ENCODE measurements at regions of chr2 and their contacts with region 1.

Region 1: DNA sequence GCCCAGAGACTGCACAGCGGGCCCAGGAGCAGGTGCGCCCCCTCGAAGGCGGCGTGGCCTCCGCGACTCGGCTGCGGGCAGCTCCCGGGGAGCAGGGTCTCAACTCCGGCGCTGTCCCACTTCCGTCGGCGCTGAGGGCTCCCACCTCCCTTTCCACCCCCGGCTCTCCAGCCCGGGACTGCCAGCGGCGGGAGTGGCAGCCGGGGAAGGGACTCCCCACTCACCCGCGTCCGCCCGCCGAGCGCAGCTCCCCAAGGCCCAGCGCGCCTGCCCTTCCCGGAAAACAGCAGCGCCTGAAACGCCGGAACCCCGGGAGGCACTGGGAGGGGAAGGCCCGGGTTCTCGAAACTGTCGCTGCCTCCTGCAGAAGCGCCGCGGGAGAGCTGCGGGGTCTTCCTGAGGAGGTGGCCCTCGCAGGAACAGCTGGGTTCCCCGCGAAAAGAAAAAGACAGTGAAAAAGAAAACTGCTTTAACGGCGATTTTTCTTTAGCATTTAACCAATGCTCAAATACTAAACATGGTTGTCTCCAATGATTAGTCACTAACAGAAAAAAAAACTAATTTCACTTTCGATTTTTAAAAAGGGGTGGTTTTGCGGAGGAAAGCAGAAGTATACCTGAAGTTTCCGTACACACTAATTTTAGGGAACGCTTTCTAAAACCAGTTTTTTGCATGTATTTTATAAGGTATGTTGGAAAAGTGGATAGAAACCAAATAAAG is at the start of gene NMI:
- DNase-seq: peak; percentile 59
- ATAC-seq: peak; percentile 85
- H3K4me3 ChIP-seq: peak within 1 kb of the TSS; percentile 57
- H3K27ac ChIP-seq: peak within 1 kb of the TSS; percentile 93
- H3K4me1 ChIP-seq: peaks cover 2% of the 10 kb centered on the region; the same call in 1 of the 2 replicates
- H3K27me3 ChIP-seq: no peaks in the 10 kb centered on the region
- CTCF ChIP-seq: no peak
- POLR2A ChIP-seq: peak; percentile 59; the same call in 1 of the 2 replicates
- RAD21 ChIP-seq: no peak
- total RNA-seq, gene NMI: 2.3 and 5.8 TPM in 2 replicates

Region 2: DNA sequence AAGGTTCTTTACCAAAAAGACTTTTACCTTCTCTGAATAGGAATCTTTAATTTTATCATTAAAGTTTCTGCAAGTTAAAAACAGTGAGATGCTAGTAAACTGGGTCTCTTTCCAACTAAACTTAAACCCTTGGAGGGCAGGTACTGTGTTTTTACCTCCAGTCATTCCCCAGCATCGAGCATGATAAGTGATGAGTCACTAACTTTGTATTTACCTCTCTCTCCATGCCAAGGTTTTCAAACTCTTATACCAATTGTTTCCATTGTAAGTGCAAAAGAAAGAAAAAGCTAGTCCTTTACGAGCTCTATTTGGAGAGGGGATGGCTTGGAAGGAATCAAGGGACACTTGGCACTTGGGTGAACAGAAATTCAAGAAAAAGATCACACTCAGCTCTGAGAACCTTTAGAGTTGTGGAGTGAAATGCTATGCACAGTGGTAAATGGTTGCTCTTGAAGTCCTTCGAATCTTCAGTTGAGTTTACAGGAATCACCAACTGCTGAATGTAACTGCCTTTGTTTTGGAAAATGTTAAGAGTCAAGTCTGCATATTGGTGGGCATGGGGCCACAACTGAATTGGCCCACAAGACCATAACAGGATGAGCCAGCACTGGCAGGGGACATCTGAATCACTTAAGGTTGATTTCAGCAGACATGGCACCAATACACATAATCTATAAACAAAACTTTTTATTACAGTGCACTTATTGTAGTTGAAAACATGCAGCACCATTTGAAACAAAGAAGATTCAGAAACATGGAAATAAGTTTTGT is 19.5 kb before region 1 on chr2:
- CTCF ChIA-PET with region 1: no interaction called
- POLR2A ChIA-PET with region 1: interaction called, 17 read pairs
- dilution Hi-C with region 1: no loop called
- in situ Hi-C with region 1: no loop called
- intact Hi-C with region 1: no loop called
- DNase-seq: no peak
- ATAC-seq: no peak
- H3K4me3 ChIP-seq: no peak overlapping the region
- H3K27ac ChIP-seq: no peak overlapping the region
- H3K4me1 ChIP-seq: no peaks in the 10 kb centered on the region
- H3K27me3 ChIP-seq: no peaks in the 10 kb centered on the region
- CTCF ChIP-seq: no peak
- POLR2A ChIP-seq: no peak
- RAD21 ChIP-seq: no peak

Region 3: DNA sequence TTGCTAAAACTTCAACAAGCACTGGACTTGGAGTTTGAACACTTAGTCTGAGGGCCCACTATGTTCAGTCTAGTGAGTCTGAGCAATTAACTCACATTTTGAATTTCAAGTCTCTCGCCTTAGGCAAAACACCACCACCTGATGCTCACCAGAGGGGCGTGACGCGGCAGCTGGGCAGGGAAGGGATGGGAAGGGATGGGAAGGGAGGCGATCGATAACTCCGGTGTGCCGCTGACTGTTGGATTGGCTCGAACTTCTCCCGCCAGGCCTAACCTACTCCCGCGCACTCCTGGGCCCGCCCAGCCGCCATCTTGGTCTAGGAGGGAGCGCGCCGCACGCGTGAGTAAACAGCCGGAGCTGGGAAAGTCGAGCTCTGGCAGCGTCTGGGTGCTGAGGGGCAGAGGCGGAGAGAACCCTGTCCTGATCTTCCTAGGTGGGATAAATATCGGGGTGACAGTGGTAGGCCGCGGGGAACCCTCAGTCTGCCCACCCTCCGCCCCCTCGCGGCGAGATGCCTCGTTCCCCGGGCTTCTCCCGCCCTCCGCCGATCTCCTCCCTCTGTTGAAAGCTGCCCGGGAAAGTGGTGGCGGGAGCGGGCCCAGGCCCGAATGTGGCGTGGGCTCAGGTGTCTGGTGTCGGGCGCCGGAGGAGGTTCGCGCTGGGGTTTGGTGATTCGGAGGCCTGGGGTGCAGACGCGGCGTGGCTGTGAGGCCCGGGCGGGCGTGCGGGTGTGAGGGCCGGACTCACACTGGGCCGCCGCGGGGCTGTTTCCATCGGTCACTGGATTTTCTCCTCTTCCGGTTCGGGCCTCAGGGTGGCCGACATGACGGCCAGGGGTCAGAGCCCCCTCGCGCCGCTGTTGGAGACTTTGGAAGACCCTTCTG is 120.3 kb after region 1 on chr2 and contains the start of gene RIF1:
- CTCF ChIA-PET with region 1: no interaction called
- POLR2A ChIA-PET with region 1: interaction called, 3 read pairs
- dilution Hi-C with region 1: no loop called
- in situ Hi-C with region 1: loop called (anchors 10 kb)
- intact Hi-C with region 1: loop called (anchors 1 kb)
- DNase-seq: peak; percentile 93
- ATAC-seq: peak; percentile 98
- H3K4me3 ChIP-seq: peak within 1 kb of the TSS; percentile 87
- H3K27ac ChIP-seq: peak within 1 kb of the TSS; percentile 91
- H3K4me1 ChIP-seq: no peaks in the 10 kb centered on the region
- H3K27me3 ChIP-seq: no peaks in the 10 kb centered on the region
- CTCF ChIP-seq: peak; percentile 54
- POLR2A ChIP-seq: peak; percentile 72; the same call in 1 of the 2 replicates
- RAD21 ChIP-seq: no peak; the same call in 1 of the 2 replicates
- total RNA-seq, gene RIF1: 43.9 and 53.6 TPM in 2 replicates